Activated CD4-positive, alpha-beta memory T cell treated with anti-CD3 and anti-CD28 coated beads for 36 hours (primary cell): ENCODE measurements at regions of chr11 and their contacts with region 1.

Region 1: DNA sequence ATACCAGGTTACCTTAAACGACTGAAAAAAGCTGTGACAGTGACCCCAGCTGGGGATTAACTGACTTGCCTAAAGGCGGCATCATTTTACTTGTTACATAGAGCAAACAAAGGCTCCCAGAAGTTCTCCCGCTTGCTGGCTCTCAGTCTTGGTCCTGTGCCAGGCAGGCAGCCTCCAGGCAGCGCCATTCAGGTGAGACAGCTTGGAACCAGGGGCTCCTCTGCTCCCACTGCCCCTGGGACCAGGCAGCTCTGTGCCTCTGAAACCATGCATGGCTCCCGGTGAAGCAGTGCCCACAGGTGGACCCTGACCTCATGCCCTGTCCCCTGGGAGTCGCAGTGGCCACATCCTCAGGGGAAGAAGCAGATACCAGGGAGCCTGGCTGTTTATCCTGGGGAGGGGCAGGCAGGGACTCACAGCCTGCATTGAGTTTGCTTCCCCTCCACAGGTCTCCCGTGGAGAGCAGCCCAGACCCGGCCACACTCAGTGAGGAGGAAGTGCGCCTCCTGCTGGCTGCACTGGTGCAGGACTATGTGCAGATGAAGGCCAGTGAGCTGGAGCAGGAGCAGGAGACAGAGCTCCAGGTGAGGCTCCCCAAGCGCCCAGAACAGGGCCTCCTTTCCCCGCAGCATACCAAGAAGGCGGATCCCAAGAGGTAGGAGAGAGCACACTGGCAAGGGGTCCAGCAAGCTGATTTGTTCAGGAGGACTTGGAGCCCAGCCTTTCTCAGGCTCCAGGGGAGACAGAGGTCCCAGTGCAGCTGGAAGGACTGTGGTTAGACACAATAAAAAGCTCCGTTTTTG is 15.6 kb upstream of the CYP2R1 start:
- DNase-seq: peak; percentile 91
- H3K4me3 Mint-ChIP-seq: no peak overlapping the region
- H3K27ac Mint-ChIP-seq: no peak overlapping the region
- H3K4me1 Mint-ChIP-seq: peaks cover 36% of the 10 kb centered on the region
- H3K27me3 Mint-ChIP-seq: no peaks in the 10 kb centered on the region

Region 2: DNA sequence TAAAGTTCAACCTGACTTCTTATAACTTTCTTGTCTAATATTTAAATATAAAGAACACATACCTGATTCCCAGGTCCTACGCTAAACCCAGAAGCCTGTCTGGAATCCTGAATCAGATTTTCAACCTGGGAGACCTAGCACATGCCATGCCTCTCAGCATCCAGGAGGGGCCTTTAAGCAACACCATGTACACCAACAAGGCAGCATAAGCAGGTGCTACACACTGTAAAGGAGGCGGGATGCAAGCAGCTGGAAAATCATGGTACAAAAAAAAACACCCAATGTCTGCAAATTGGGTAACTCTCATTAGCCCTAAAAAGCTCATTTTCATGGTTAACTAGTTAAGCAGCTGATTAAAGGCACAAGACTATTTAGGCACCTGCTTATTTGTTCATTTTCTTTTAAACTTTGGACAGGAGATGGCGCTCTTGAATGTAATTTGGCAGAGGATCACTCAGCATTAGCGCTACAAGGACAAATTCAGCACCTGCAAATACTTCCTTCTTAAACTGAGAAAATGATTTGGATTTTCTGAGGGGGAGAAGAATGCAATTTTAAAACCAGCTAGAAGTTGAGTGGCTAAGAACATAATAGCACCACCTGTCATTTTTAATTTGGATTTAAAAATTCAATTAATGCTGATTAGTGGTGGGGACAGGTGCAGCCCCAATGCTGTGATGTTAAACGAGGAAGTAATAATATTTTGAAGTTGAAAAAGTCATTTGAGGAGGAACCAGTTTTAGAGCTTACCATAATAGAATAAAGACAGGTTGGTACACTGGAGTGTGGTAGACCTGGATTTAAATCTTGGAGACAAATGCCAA is 1135.2 kb before region 1 on chr11:
- CTCF ChIA-PET with region 1: no interaction called
- POLR2A ChIA-PET with region 1: no interaction called
- intact Hi-C with region 1: loop called (anchors 5 kb)
- DNase-seq: no peak
- H3K4me3 Mint-ChIP-seq: no peak overlapping the region
- H3K27ac Mint-ChIP-seq: no peak overlapping the region
- H3K4me1 Mint-ChIP-seq: peaks cover 4% of the 10 kb centered on the region
- H3K27me3 Mint-ChIP-seq: no peaks in the 10 kb centered on the region

Region 3: GRCh38 chr11:14519917-14520746 is 387.5 kb before region 1 on chr11 and contains the start of gene PSMA1:
- CTCF ChIA-PET with region 1: interaction called, 12 read pairs
- POLR2A ChIA-PET with region 1: interaction called, 3 read pairs
- intact Hi-C with region 1: loop called (anchors 1 kb)
- DNase-seq: peak; percentile 97
- H3K4me3 Mint-ChIP-seq: peak within 1 kb of the TSS; percentile 96
- H3K27ac Mint-ChIP-seq: peak within 1 kb of the TSS; percentile 97
- H3K4me1 Mint-ChIP-seq: peaks cover 28% of the 10 kb centered on the region
- H3K27me3 Mint-ChIP-seq: no peaks in the 10 kb centered on the region
- total RNA-seq, gene PSMA1: 332 to 339 TPM

Region 4: GRCh38 chr11:14625586-14626205 is 281.9 kb before region 1 on chr11:
- CTCF ChIA-PET with region 1: interaction called, 29 read pairs
- POLR2A ChIA-PET with region 1: no interaction called
- intact Hi-C with region 1: no loop called
- DNase-seq: no peak
- H3K4me3 Mint-ChIP-seq: no peak overlapping the region
- H3K27ac Mint-ChIP-seq: no peak overlapping the region
- H3K4me1 Mint-ChIP-seq: peaks cover 40% of the 10 kb centered on the region
- H3K27me3 Mint-ChIP-seq: no peaks in the 10 kb centered on the region

Region 5: GRCh38 chr11:14809466-14809865 is 98.1 kb before region 1 on chr11:
- CTCF ChIA-PET with region 1: interaction called, 15 read pairs
- POLR2A ChIA-PET with region 1: no interaction called
- intact Hi-C with region 1: no loop called
- DNase-seq: no peak
- H3K4me3 Mint-ChIP-seq: no peak overlapping the region
- H3K27ac Mint-ChIP-seq: no peak overlapping the region
- H3K4me1 Mint-ChIP-seq: no peaks in the 10 kb centered on the region
- H3K27me3 Mint-ChIP-seq: no peaks in the 10 kb centered on the region

Region 6: GRCh38 chr11:14967581-14968243 is 60.1 kb after region 1 on chr11:
- CTCF ChIA-PET with region 1: interaction called, 55 read pairs
- POLR2A ChIA-PET with region 1: no interaction called
- intact Hi-C with region 1: no loop called
- DNase-seq: no peak
- H3K4me3 Mint-ChIP-seq: no peak overlapping the region
- H3K27ac Mint-ChIP-seq: no peak overlapping the region
- H3K4me1 Mint-ChIP-seq: peaks cover 3% of the 10 kb centered on the region
- H3K27me3 Mint-ChIP-seq: peaks cover 36% of the 10 kb centered on the region

Region 7: DNA sequence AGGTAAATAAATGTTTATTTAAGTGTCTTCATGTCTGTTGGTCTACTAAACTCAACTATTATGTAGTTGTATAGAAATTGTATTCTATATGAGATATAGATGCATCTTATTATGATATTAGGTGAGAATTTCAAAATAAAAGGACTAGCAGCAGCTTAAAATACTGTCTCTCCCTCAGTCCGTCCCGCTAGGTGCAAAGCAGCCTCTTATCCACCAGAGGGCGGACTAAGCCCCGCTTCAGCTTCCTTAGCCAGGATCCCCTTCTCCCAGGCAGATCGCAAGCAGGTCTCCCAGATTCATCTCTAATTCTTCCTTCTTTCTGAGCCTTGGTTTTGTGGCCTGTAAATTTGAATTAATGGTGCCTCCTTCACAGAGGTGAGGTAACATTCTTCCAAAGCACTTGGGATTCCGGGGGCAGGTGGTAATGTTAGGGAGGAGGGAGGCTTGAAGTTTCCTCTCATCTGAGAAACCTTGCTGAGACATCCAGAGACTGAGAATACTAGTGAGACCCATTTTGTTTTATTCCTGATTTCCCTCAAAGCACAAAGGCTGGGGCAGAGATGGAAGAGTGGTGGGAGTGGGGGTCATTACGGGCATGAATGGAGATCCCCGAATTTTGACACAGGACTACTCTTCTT is 193.6 kb after region 1 on chr11:
- CTCF ChIA-PET with region 1: interaction called, 17 read pairs
- POLR2A ChIA-PET with region 1: no interaction called
- intact Hi-C with region 1: no loop called
- DNase-seq: peak; percentile 66
- H3K4me3 Mint-ChIP-seq: no peak overlapping the region
- H3K27ac Mint-ChIP-seq: no peak overlapping the region
- H3K4me1 Mint-ChIP-seq: no peaks in the 10 kb centered on the region
- H3K27me3 Mint-ChIP-seq: peaks cover 14% of the 10 kb centered on the region